K562 (cell line): ENCODE measurements at regions of chr1 and their contacts with region 1.

Region 1: GRCh38 chr1:22025368-22026155 is 24.1 kb downstream of the CELA3A start:
- DNase-seq: peak; percentile 92 to 99 (median 94)
- ATAC-seq: peak; percentile 88
- H3K4me3 ChIP-seq: peak overlapping the region; percentile 73
- H3K27ac ChIP-seq: peak overlapping the region; percentile 99
- H3K4me1 ChIP-seq: peaks cover 24 to 28% of the 10 kb centered on the region in 2 experiments
- H3K27me3 ChIP-seq: no peaks in the 10 kb centered on the region
- CTCF ChIP-seq: no peak; a peak in 1 of 6 replicates
- EP300 ChIP-seq: peak; percentile 87
- POLR2A ChIP-seq: peak; percentile 99
- RAD21 ChIP-seq: 0 out of 4 replicates have a peak, but pooled peaks of 1 of the 2 experiments have one; percentile 12

Region 2: DNA sequence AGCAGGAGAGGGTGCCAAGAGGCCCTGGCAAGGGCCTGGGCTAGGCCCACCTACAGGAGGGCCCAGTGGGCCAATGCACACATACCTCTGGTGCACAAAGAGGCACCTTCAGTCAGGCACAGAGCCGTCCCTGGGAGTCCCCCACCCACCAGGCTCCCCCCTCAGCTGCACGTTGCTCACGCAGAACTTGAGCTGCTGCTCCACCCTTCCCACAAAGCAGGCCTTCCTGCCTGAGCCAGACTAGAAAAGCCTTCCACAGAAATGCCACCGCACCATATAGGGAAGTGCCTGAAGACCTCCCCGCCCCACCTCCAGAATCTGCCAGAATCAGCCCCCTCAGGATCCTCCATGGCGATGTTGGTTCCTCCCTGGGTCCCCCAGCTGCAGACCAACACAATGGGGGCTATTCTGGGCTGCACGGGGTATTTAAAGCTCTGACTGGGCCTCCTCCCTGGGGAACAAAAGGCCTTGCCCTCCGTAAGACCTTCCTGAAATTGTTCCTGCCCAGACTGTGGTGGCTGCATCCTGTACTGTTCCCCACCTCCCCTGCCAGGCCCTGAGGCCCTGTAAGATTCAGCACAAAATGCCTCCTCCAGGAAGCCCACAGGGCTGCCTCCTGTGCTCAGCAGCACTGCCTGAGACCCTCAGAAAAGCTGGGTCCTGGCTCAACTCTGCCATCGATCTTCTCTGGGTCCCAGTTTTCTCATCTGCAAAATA is 115.6 kb before region 1 on chr1:
- CTCF ChIA-PET with region 1: no interaction called
- POLR2A ChIA-PET with region 1: no interaction called
- in situ Hi-C with region 1: no loop called
- intact Hi-C with region 1: loop called (anchors 10 kb)
- DNase-seq: peak in 2 of 4 experiments; percentile 27 to 60
- ATAC-seq: no peak
- H3K4me3 ChIP-seq: no peak overlapping the region
- H3K27ac ChIP-seq: peak overlapping the region; percentile 46
- H3K4me1 ChIP-seq: peaks cover 76 to 81% of the 10 kb centered on the region in 2 experiments
- H3K27me3 ChIP-seq: no peaks in the 10 kb centered on the region
- CTCF ChIP-seq: no peak
- EP300 ChIP-seq: no peak
- POLR2A ChIP-seq: no peak
- RAD21 ChIP-seq: no peak

Region 3: GRCh38 chr1:21963477-21964217 is 61.9 kb before region 1 on chr1:
- CTCF ChIA-PET with region 1: no interaction called
- POLR2A ChIA-PET with region 1: no interaction called
- in situ Hi-C with region 1: no loop called
- intact Hi-C with region 1: loop called (anchors 10 kb)
- DNase-seq: peak; percentile 87 to 93 (median 89)
- ATAC-seq: peak; percentile 97
- H3K4me3 ChIP-seq: no peak overlapping the region
- H3K27ac ChIP-seq: no peak overlapping the region; the same call in 2 of the 3 replicates
- H3K4me1 ChIP-seq: peaks cover 4 to 9% of the 10 kb centered on the region in 2 experiments; a peak in 3 of 5 replicates
- H3K27me3 ChIP-seq: peaks cover 2 to 6% of the 10 kb centered on the region in 2 experiments; a peak in 2 of 5 replicates
- CTCF ChIP-seq: peak; percentile 91 to 97 (median 97)
- EP300 ChIP-seq: peak; percentile 35; the same call in 1 of the 2 replicates
- POLR2A ChIP-seq: no peak
- RAD21 ChIP-seq: peak; percentile 97 to 99

Region 4: DNA sequence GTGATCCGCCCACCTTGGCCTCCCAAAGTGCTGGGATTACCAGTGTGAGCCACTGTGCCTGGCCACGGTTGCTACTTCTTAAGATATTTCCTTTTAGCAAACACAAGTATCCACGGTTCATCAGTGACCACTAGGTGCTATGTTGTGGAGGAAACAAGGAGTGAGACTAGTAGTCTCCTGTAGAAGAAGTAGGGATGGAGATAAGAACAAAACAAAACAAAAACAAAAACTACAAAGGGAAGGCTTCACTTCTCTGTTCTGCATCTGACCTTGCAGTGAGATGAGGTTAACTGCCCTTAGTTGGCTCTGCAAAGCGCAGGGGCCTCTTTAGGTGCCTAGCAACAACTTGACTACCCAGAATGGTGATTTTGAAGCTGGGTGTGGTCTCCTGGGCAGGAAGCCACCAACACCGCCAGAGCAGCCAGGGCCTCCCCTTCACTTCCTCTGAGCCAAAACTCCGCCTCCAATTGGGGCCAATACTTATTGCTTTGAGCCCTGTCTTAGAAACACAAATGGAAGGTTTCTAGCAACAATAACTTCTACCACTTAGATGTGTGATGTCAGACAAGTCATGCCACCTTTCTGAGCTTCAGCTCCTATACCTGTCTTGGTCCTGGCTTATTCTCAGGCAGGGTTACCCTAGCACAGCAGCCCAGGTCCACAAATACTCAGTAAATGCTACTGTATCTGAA is 14.2 kb after region 1 on chr1:
- CTCF ChIA-PET with region 1: no interaction called
- POLR2A ChIA-PET with region 1: interaction called, 63 read pairs
- in situ Hi-C with region 1: no loop called
- intact Hi-C with region 1: no loop called
- DNase-seq: peak; percentile 37 to 91 (median 58)
- ATAC-seq: peak; percentile 96
- H3K4me3 ChIP-seq: no peak overlapping the region
- H3K27ac ChIP-seq: peak overlapping the region; percentile 74
- H3K4me1 ChIP-seq: peaks cover 31 to 43% of the 10 kb centered on the region in 2 experiments
- H3K27me3 ChIP-seq: no peaks in the 10 kb centered on the region
- CTCF ChIP-seq: no peak
- EP300 ChIP-seq: no peak
- POLR2A ChIP-seq: 0 out of 2 replicates have a peak, but pooled peaks have one; percentile 41
- RAD21 ChIP-seq: peak in 1 of 2 experiments; percentile 18; a peak in 1 of 4 replicates

Region 5: DNA sequence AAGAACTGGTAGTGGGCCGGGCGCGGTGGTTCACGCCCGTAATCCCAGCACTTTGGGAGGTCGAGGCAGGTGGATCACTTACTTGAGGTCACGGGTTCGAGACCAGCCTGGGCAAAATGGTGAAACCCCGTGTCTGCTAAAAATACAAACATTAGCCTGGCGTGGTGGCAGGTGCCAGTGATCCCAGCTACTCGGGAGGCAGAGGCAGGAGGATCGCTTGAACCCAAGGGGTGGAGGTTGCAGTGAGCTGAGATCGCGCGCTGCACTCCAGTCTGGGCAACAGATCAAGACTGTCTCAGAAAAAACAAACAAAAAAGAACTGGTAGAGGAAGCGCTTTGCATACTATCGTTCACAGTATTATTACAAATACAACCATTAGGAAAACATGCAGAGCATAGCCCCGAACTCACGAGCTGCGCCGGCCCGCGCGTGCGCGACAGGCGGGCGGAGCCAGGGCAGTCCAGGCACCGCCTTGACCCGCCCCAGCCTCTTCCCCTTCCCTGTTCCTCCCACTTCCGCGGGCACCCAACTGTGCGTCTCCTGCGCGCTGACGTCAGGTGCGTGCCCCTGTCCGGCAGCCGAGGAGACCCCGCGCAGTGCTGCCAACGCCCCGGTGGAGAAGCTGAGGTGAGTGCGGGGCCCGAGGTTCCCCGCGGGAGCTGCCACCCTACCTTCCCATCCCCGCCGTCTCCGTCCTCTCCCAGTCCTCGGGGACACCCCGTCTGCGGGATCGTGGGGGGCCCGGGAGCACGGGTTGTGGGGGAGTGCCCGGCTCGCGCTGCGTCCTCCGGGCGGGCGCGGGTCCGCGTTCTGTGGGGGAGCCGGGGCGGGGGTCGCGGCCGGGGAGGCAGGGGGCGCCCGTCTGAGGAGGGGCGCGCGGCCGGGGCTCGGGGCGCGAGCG is 26.8 kb after region 1 on chr1 and contains the start of gene CDC42:
- CTCF ChIA-PET with region 1: no interaction called
- POLR2A ChIA-PET with region 1: interaction called, 25 read pairs
- in situ Hi-C with region 1: no loop called
- intact Hi-C with region 1: loop called (anchors 1 kb)
- DNase-seq: peak; percentile 96 to 99 (median 98)
- ATAC-seq: peak; percentile 93
- H3K4me3 ChIP-seq: peak within 1 kb of the TSS; percentile 97
- H3K27ac ChIP-seq: peak within 1 kb of the TSS; percentile 96
- H3K4me1 ChIP-seq: peaks cover 33 to 35% of the 10 kb centered on the region in 2 experiments
- H3K27me3 ChIP-seq: no peaks in the 10 kb centered on the region
- CTCF ChIP-seq: no peak
- EP300 ChIP-seq: no peak; the same call in 1 of the 2 replicates
- POLR2A ChIP-seq: peak; percentile 96
- RAD21 ChIP-seq: peak in 1 of 2 experiments; percentile 2; a peak in 1 of 4 replicates
- polyA plus RNA-seq, gene CDC42: 230 to 325 TPM

Region 6: DNA sequence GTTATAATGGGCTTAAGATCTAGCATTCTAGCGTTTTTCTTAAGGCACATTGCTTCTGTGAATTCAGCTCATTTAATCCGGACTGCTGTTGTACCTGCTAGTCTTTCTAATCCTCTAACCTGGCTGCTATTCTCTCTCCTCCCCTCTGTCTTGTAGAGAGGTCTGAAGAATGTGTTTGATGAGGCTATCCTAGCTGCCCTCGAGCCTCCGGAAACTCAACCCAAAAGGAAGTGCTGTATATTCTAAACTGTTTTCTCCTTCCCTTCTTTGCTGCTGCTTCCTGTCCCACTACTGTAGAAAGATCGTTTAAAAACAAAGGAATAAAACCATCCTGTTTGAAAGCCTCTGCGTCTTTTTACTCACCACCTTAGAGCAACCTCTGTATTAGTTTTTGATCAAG is 64.2 kb after region 1 on chr1:
- CTCF ChIA-PET with region 1: no interaction called
- POLR2A ChIA-PET with region 1: interaction called, 3 read pairs
- in situ Hi-C with region 1: no loop called
- intact Hi-C with region 1: loop called (anchors 5 kb)
- DNase-seq: no peak
- ATAC-seq: no peak; the same call in 2 of the 3 replicates
- H3K4me3 ChIP-seq: no peak overlapping the region
- H3K27ac ChIP-seq: peak overlapping the region; percentile 23; the same call in 1 of the 3 replicates
- H3K4me1 ChIP-seq: peaks cover 0 to 5% of the 10 kb centered on the region in 2 experiments; a peak in 1 of 5 replicates
- H3K27me3 ChIP-seq: no peaks in the 10 kb centered on the region
- CTCF ChIP-seq: no peak
- EP300 ChIP-seq: no peak
- POLR2A ChIP-seq: no peak
- RAD21 ChIP-seq: no peak